H1 (cell line): ENCODE measurements at regions of chr19 and their contacts with region 1.

Region 1: GRCh38 chr19:28977826-28978225 is 235.1 kb downstream of the UQCRFS1 start:
- DNase-seq: peak in 1 of 2 experiments; percentile 52
- H3K4me3 ChIP-seq: no peak overlapping the region
- H3K27ac ChIP-seq: no peak overlapping the region
- H3K4me1 ChIP-seq: no peaks in the 10 kb centered on the region; a peak in 1 of 7 replicates
- H3K27me3 ChIP-seq: no peaks in the 10 kb centered on the region
- CTCF ChIP-seq: peak; percentile 45 to 61 (median 60)
- EP300 ChIP-seq: no peak
- POLR2A ChIP-seq: no peak
- RAD21 ChIP-seq: peak; percentile 39 to 55

Region 2: DNA sequence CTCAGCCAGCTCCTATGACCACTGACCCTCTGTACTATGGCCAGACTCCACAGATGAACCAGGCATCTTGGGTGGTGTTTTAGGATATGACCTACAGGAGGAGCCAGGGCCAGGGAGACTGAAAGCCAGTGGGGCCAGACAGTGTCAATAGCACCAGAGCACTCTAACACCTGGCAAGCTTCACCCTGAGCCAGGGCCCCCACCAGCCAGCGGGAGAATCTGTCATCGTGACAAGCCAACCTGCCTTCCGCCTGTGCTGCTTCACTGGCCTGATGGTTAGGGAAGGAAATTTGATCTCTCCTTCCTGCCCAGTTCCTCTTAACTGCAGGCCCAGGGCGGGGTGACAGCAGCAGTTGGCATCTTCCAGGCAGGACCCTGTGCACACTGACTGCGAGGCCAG is 12.7 kb after region 1 on chr19:
- CTCF ChIA-PET with region 1: interaction called, 10 read pairs
- POLR2A ChIA-PET with region 1: no interaction called
- DNase-seq: no peak
- H3K4me3 ChIP-seq: no peak overlapping the region
- H3K27ac ChIP-seq: no peak overlapping the region
- H3K4me1 ChIP-seq: peaks cover 1 to 13% (median 5%) of the 10 kb centered on the region in 4 experiments; a peak in 5 of 7 replicates
- H3K27me3 ChIP-seq: peaks cover 0 to 3% (median 0%) of the 10 kb centered on the region in 4 experiments; a peak in 2 of 7 replicates
- CTCF ChIP-seq: peak in 2 of 3 experiments; percentile 16 to 23; a peak in 1 of 4 replicates
- EP300 ChIP-seq: no peak
- POLR2A ChIP-seq: no peak
- RAD21 ChIP-seq: peak; percentile 16 to 32; a peak in 2 of 4 replicates

Region 3: GRCh38 chr19:29022599-29022998 is 44.8 kb after region 1 on chr19:
- CTCF ChIA-PET with region 1: no interaction called
- POLR2A ChIA-PET with region 1: no interaction called
- DNase-seq: no peak
- H3K4me3 ChIP-seq: no peak overlapping the region
- H3K27ac ChIP-seq: no peak overlapping the region
- H3K4me1 ChIP-seq: no peaks in the 10 kb centered on the region; a peak in 1 of 7 replicates
- H3K27me3 ChIP-seq: no peaks in the 10 kb centered on the region
- CTCF ChIP-seq: no peak
- EP300 ChIP-seq: no peak
- POLR2A ChIP-seq: no peak
- RAD21 ChIP-seq: no peak

Region 4: DNA sequence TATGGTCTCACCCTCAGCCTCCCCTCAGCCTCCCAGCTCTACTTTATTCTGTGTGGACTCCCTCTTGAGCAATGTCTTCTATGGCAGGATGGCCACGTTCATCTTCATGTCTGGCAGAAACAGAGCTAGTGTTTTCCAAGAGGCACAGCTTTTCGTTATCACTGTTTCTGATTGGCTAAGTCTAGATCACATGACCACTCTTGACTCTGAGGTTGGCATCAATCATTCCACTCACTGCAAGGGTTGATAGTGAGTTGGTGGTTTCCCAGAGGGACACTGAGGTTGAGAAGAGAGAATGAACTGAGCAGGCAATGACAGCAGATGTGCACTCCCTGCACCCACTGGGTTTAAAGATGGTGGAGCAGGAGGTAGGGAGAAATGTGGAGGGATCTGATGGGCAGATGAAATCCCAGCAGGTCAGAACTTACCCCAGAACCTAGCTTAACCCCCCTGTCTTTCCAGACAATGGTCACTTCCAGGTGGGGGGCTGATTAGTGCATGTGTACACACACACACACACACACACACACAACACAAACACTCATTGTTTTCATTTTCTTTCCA is 261.5 kb after region 1 on chr19:
- CTCF ChIA-PET with region 1: no interaction called
- POLR2A ChIA-PET with region 1: no interaction called
- DNase-seq: no peak
- H3K4me3 ChIP-seq: no peak overlapping the region
- H3K27ac ChIP-seq: no peak overlapping the region
- H3K4me1 ChIP-seq: no peaks in the 10 kb centered on the region
- H3K27me3 ChIP-seq: no peaks in the 10 kb centered on the region
- CTCF ChIP-seq: no peak
- EP300 ChIP-seq: no peak
- POLR2A ChIP-seq: no peak
- RAD21 ChIP-seq: no peak